ENCODE measurements at regions of chr1 and their contacts with region 1.

Region 1: DNA sequence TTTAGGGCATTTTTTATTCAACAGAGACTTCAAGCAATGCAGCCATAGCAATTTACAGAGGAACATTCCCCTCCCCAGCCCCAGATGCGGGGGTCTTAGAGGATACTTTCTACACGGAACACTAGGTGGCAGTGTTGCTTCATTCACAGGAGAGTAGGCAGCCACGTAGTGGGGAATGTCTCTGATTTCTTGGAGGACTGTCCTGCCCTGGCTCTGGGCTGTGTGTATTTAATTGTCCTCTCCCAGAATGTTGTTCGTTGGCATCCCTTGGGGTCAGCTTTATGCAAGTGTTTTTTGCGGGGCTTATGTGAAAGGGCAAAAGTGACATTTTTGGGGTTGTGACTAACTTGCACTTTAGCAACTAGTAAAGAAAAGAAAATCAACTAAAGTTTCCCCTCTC is 96.9 kb downstream of the PAPPA2 start:
- DNase-seq: peak; percentile 64
- ATAC-seq: peak; percentile 87
- H3K4me3 ChIP-seq: no peak overlapping the region
- H3K27ac ChIP-seq: no peak overlapping the region
- H3K4me1 ChIP-seq: no peaks in the 10 kb centered on the region
- H3K27me3 ChIP-seq: peaks cover 12% of the 10 kb centered on the region
- CTCF ChIP-seq: peak; percentile 83

Region 2: GRCh38 chr1:176494436-176494835 is 65.4 kb before region 1 on chr1:
- CTCF ChIA-PET with region 1: no interaction called
- POLR2A ChIA-PET with region 1: no interaction called
- intact Hi-C with region 1: no loop called
- DNase-seq: no peak
- ATAC-seq: no peak
- H3K4me3 ChIP-seq: no peak overlapping the region
- H3K27ac ChIP-seq: no peak overlapping the region
- H3K4me1 ChIP-seq: no peaks in the 10 kb centered on the region
- H3K27me3 ChIP-seq: 0 out of 2 replicates have a peak, but pooled peaks cover 4% of the 10 kb centered on the region
- CTCF ChIP-seq: no peak

Region 3: GRCh38 chr1:176691251-176692228 is 131.7 kb after region 1 on chr1:
- CTCF ChIA-PET with region 1: interaction called, 3 read pairs
- POLR2A ChIA-PET with region 1: no interaction called
- intact Hi-C with region 1: loop called (anchors 1 kb)
- DNase-seq: peak; percentile 59
- ATAC-seq: peak; percentile 64
- H3K4me3 ChIP-seq: no peak overlapping the region
- H3K27ac ChIP-seq: no peak overlapping the region
- H3K4me1 ChIP-seq: peaks cover 3% of the 10 kb centered on the region
- H3K27me3 ChIP-seq: 0 out of 2 replicates have a peak, but pooled peaks cover 4% of the 10 kb centered on the region
- CTCF ChIP-seq: peak; percentile 77

Region 4: DNA sequence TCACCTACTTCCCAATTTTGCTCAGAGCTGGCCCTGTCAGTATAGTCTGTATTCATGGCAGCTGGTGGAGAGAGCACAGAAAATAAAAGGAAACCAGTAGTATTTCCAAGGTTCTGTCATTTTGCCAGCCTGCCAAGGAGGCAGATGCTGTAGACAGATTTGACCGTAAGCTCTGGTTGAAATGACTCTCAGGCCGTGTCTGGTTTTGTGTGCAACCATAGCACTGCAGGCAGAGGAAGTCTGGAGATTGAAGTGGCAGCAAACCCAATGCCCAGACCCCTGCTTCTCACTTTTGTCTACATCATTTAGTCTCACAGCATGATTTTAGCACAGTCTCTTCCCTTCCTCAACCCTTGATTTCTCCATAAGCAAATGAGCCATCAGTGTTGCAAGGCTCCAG is 194.8 kb after region 1 on chr1:
- CTCF ChIA-PET with region 1: no interaction called
- POLR2A ChIA-PET with region 1: no interaction called
- intact Hi-C with region 1: no loop called
- DNase-seq: no peak
- ATAC-seq: no peak
- H3K4me3 ChIP-seq: no peak overlapping the region
- H3K27ac ChIP-seq: no peak overlapping the region
- H3K4me1 ChIP-seq: peaks cover 4% of the 10 kb centered on the region; the same call in 1 of the 2 replicates
- H3K27me3 ChIP-seq: peaks cover 5% of the 10 kb centered on the region; the same call in 1 of the 2 replicates
- CTCF ChIP-seq: no peak

Region 5: DNA sequence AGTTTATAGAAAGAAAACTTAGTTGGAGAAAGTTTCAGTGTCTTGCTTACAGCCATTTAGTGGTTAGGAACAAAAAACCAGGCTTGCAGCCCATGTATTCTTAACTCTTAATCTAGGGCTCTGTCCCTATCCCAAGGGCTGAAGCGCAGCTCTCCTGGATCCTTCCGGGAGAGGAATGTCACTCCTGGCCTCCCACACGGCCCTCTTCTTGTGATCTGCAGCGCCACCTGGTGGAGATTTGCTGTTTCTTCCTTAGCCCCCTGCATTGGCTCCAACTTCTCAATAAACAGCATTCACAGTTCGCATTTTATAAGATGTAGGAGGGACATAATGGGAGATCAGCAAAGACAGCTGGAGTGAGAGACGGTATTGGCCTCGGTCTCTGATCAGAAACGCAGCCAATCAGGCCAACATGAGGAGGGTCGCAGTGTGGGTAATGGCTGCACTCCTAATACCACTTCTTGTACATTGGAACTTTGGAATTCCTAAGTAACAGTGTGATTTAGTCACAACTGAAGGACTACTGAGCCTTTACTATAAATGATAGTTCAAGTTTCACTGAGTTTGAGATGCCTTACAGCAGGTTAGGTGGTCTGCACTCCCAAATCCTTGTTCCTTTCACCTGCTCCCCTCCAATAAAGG is 321.2 kb after region 1 on chr1:
- CTCF ChIA-PET with region 1: no interaction called
- POLR2A ChIA-PET with region 1: no interaction called
- intact Hi-C with region 1: loop called (anchors 1 kb)
- DNase-seq: peak; percentile 76
- ATAC-seq: peak; percentile 85
- H3K4me3 ChIP-seq: no peak overlapping the region
- H3K27ac ChIP-seq: no peak overlapping the region
- H3K4me1 ChIP-seq: no peaks in the 10 kb centered on the region
- H3K27me3 ChIP-seq: peaks cover 16% of the 10 kb centered on the region
- CTCF ChIP-seq: peak; percentile 80

Region 6: GRCh38 chr1:176939993-176940392 is 380.1 kb after region 1 on chr1:
- CTCF ChIA-PET with region 1: no interaction called
- POLR2A ChIA-PET with region 1: no interaction called
- intact Hi-C with region 1: no loop called
- DNase-seq: peak; percentile 8
- ATAC-seq: no peak
- H3K4me3 ChIP-seq: no peak overlapping the region
- H3K27ac ChIP-seq: no peak overlapping the region
- H3K4me1 ChIP-seq: no peaks in the 10 kb centered on the region
- H3K27me3 ChIP-seq: no peaks in the 10 kb centered on the region
- CTCF ChIP-seq: no peak

Measured in PC-3 (cell line).